ENCODE measurements at regions of chr1 and their contacts with region 1.

Region 1: DNA sequence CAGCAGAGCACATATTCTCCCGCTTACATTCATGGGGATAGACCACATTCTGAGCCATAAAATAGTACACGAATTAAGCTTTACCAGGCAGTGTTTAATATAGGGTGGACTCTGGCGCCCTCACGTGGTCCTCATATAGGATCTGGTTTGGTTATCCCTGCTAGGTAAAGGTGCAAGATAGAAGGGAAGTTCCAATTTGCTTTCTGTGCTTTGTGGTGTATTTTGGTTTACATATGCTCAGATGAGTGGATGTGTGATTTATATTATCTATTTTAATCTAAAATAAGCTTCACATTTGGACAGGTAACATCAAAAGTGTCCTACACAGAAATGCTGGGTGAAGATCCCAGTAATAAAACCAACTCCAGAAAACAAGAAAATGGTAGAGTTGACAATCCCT is 3.6 kb downstream of the CR1 start:
- DNase-seq: peak; percentile 93
- ATAC-seq: peak; percentile 71
- H3K4me3 Mint-ChIP-seq: no peak overlapping the region
- H3K27ac Mint-ChIP-seq: peak overlapping the region; percentile 62
- H3K4me1 Mint-ChIP-seq: peaks cover 25% of the 10 kb centered on the region
- H3K27me3 Mint-ChIP-seq: peaks cover 14% of the 10 kb centered on the region
- CTCF ChIP-seq: peak; percentile 92

Region 2: GRCh38 chr1:207052911-207053769 is 446.4 kb before region 1 on chr1 and contains the start of gene PFKFB2:
- CTCF ChIA-PET with region 1: interaction called, 12 read pairs
- POLR2A ChIA-PET with region 1: interaction called, 4 read pairs
- intact Hi-C with region 1: no loop called
- DNase-seq: peak; percentile 97
- ATAC-seq: peak; percentile 87
- H3K4me3 Mint-ChIP-seq: peak within 1 kb of the TSS; percentile 99
- H3K27ac Mint-ChIP-seq: peak within 1 kb of the TSS; percentile 84
- H3K4me1 Mint-ChIP-seq: peaks cover 30% of the 10 kb centered on the region
- H3K27me3 Mint-ChIP-seq: no peaks in the 10 kb centered on the region
- CTCF ChIP-seq: no peak
- total RNA-seq, gene PFKFB2: 3.5 to 4.3 TPM

Region 3: DNA sequence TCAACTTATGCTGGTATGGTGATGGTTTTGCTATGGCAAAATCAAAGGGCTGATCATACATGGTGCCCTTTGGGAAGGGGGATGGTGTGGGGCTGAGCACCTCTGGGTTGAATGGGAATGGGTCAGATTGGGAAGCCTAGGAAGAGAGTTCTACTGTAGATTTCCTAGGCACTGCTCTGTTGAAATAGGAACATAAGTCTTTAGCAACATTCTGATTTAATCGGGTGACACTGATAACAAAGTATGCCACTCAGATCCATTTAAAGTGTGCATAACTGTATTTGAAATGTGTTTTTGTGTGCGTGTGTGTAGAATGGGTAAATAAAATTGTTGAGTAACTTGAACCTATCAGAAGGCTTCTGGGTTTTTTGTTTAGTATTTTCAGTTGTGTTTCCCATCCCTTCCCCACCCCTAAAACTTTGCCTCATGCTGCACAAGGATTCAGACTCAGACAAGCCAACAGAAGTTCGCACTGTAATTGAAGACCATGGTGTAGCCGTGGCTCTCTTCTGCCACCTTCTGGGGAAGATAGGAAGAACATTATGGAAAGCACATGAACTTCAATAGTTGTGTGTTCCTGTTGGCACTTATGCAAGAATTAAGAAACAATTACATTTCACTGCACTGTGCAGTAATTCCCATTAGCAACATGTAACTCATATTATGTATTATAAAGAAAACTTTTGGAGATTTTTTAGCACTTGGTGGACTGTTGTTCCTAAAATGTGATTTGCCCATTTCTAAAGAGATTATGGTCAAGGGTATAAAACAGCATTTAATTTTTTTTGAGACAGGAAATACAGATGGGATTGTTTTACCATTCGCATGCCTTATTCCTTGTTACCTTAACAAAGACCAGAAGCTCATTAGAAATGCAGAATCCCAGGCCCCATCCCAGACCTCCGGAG is 421.8 kb before region 1 on chr1:
- CTCF ChIA-PET with region 1: interaction called, 12 read pairs
- POLR2A ChIA-PET with region 1: no interaction called
- intact Hi-C with region 1: no loop called
- DNase-seq: peak; percentile 76
- ATAC-seq: peak; percentile 98
- H3K4me3 Mint-ChIP-seq: no peak overlapping the region
- H3K27ac Mint-ChIP-seq: no peak overlapping the region
- H3K4me1 Mint-ChIP-seq: no peaks in the 10 kb centered on the region
- H3K27me3 Mint-ChIP-seq: no peaks in the 10 kb centered on the region
- CTCF ChIP-seq: peak; percentile 90

Region 4: DNA sequence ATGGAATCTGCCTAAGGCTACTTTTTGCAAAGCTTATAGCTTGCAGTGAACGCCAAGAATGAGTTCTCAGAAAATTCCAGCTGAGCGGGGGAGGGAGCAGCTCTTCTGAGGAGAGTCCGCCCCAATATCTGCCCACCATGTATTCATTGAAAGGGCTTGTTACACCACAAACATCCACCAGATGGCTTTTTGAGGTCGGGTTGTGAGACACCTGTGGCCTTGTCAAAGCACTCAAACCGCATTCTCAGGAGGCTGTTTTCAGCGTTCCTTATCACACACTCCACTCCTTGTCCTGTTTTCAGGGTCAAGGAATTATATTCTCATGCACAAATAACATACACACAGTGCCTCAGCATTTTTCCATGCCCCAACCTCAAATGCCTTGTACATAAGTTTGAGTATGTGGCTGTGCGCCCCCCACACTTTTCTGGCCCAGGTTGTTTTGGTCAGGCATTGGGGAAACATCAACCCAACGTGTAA is 414.8 kb before region 1 on chr1:
- CTCF ChIA-PET with region 1: interaction called, 29 read pairs
- POLR2A ChIA-PET with region 1: interaction called, 3 read pairs
- intact Hi-C with region 1: loop called (anchors 2 kb)
- DNase-seq: peak; percentile 73
- ATAC-seq: peak; percentile 83
- H3K4me3 Mint-ChIP-seq: no peak overlapping the region
- H3K27ac Mint-ChIP-seq: no peak overlapping the region
- H3K4me1 Mint-ChIP-seq: peaks cover 25% of the 10 kb centered on the region
- H3K27me3 Mint-ChIP-seq: peaks cover 2% of the 10 kb centered on the region
- CTCF ChIP-seq: peak; percentile 70

Region 5: DNA sequence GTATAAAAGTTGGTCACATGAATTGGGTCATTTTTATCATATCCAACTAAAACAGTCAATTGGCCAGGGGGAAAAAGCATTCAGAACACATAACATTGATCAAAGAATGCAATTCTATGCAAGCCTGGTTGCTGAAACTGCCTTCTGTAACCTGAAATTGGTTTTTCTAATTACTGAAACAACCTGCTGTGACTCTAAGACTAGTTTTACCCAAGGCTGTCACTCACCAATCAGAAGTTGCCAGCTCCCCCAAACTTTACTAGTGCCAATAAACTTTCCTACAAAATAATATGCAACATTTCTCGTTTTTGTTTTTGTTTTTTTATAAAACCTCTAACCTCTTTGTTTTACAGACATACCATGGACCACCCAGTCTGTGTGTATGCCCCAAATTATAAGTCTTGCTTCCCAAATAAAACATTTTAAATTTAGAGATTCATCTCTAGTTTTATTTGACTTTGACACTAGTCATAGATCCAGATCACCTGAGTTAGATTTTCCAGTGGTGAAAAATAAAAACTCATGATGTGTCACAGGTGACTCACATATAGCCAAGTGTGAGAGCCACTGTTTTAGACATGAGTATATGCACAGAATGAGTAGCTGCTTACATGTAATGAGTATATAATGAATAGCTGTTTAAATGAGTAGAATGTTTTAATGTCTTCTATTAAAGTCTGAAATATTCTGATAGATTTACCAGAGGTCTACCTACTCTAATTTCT is 109.7 kb before region 1 on chr1:
- CTCF ChIA-PET with region 1: no interaction called
- POLR2A ChIA-PET with region 1: no interaction called
- intact Hi-C with region 1: no loop called
- DNase-seq: peak; percentile 33
- ATAC-seq: peak; percentile 97
- H3K4me3 Mint-ChIP-seq: peak overlapping the region; percentile 37
- H3K27ac Mint-ChIP-seq: peak overlapping the region; percentile 83
- H3K4me1 Mint-ChIP-seq: peaks cover 18% of the 10 kb centered on the region
- H3K27me3 Mint-ChIP-seq: no peaks in the 10 kb centered on the region
- CTCF ChIP-seq: no peak

Region 6: GRCh38 chr1:207414606-207415108 is 84.9 kb before region 1 on chr1:
- CTCF ChIA-PET with region 1: interaction called, 15 read pairs
- POLR2A ChIA-PET with region 1: no interaction called
- intact Hi-C with region 1: loop called (anchors 2 kb)
- DNase-seq: peak; percentile 84
- ATAC-seq: peak; percentile 72
- H3K4me3 Mint-ChIP-seq: no peak overlapping the region
- H3K27ac Mint-ChIP-seq: no peak overlapping the region
- H3K4me1 Mint-ChIP-seq: peaks cover 34% of the 10 kb centered on the region
- H3K27me3 Mint-ChIP-seq: peaks cover 7% of the 10 kb centered on the region
- CTCF ChIP-seq: no peak

Region 7: DNA sequence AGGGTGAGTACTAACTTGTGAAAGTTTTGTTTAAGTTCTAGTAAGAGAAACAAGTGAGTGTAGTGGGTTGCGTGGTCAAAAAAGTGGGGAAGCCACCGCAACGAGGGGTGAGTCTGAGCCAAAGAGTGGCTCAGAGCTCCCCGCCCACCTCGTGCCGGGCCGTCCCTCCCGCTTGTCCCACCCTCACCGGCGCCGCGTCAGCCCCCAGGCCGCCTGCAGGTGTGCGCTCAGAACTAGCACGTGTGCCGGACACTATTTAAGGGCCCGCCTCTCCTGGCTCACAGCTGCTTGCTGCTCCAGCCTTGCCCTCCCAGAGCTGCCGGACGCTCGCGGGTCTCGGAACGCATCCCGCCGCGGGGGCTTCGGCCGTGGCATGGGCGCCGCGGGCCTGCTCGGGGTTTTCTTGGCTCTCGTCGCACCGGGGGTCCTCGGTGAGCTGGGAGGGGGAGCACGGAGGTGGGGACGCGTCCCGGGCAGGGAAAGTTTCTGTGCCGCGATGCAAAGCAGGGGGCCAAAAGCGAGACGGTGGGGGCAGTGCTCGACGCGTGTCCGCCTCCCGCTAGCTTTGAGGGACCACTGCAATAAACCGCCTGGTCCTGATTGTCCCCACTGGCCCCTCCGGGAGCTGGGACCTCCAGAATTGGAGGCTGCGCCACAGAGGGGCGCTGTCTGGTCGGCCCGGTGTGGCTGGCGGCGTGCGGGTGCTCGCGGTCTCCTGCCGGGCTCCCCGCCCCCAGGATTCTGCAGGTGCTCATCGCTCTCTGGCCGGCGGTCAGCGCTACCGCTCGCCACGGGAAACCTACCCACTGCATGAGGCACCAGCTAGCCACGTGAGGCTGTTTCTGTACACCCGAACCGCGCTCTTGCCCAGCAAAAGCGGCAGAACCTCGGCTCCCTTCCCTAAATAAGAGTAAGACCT is 45.3 kb before region 1 on chr1 and contains the start of gene CR2:
- CTCF ChIA-PET with region 1: interaction called, 22 read pairs
- POLR2A ChIA-PET with region 1: no interaction called
- intact Hi-C with region 1: loop called (anchors 5 kb)
- DNase-seq: peak; percentile 80
- ATAC-seq: peak; percentile 85
- H3K4me3 Mint-ChIP-seq: peak within 1 kb of the TSS; percentile 68
- H3K27ac Mint-ChIP-seq: peak within 1 kb of the TSS; percentile 60
- H3K4me1 Mint-ChIP-seq: peaks cover 11% of the 10 kb centered on the region
- H3K27me3 Mint-ChIP-seq: peaks cover 17% of the 10 kb centered on the region
- CTCF ChIP-seq: peak; percentile 63
- total RNA-seq, gene CR2: 1.9 to 2.1 TPM

Region 8: DNA sequence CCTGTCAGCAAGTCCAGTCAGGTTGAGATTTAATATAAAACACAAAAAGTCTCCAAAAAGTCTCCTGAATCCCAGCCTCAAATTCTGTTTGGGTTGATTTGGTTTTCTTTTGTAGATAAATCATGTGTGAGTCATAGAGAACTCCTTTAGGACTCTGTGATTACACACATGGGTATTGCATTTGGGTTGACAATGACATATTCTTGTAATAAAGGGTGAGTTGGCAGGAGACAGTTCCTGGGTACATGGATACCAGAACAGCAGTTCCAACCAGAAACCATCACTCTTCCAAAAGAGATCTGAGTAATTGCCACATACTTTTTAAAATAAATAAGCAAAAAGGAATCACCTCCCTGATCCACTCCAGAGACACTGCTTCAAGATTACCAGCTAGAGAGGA is 36.6 kb before region 1 on chr1:
- CTCF ChIA-PET with region 1: interaction called, 13 read pairs
- POLR2A ChIA-PET with region 1: no interaction called
- intact Hi-C with region 1: loop called (anchors 5 kb)
- DNase-seq: no peak
- ATAC-seq: peak; percentile 59
- H3K4me3 Mint-ChIP-seq: no peak overlapping the region
- H3K27ac Mint-ChIP-seq: peak overlapping the region; percentile 37
- H3K4me1 Mint-ChIP-seq: peaks cover 49% of the 10 kb centered on the region
- H3K27me3 Mint-ChIP-seq: no peaks in the 10 kb centered on the region
- CTCF ChIP-seq: no peak

Region 9: DNA sequence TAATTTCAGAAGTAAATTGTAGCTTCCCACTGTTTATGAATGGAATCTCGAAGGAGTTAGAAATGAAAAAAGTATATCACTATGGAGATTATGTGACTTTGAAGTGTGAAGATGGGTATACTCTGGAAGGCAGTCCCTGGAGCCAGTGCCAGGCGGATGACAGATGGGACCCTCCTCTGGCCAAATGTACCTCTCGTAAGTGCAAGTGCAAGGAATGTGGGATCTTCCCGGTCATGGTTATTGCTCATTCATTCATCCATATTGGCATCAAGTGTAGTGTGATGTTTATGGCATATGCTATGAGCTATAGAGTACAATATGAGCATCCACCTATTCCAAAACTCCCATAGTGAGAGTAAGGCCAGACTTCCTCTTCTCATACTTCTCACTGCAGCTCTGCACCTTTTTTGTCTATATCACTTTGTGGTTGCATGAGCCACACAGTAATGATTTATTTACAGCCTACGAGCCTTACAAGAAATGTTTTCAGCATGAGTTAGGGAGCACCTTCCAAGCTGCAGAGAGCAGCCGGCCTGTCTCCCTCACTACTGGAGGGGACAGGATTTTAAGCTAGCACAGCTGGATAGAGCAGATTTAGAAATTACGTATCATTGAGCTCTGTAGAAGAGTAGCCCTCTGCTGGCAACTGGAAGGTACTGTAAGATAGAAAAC is 120.4 kb after region 1 on chr1:
- CTCF ChIA-PET with region 1: no interaction called
- POLR2A ChIA-PET with region 1: no interaction called
- intact Hi-C with region 1: no loop called
- DNase-seq: peak; percentile 6
- ATAC-seq: peak; percentile 96
- H3K4me3 Mint-ChIP-seq: no peak overlapping the region
- H3K27ac Mint-ChIP-seq: no peak overlapping the region
- H3K4me1 Mint-ChIP-seq: no peaks in the 10 kb centered on the region
- H3K27me3 Mint-ChIP-seq: no peaks in the 10 kb centered on the region
- CTCF ChIP-seq: peak; percentile 48

Measured in activated CD8-positive, alpha-beta T cell treated with anti-CD3 and anti-CD28 coated beads for 36 hours (primary cell).